ENCODE measurements at regions of chrX and their contacts with region 1.

Region 1: DNA sequence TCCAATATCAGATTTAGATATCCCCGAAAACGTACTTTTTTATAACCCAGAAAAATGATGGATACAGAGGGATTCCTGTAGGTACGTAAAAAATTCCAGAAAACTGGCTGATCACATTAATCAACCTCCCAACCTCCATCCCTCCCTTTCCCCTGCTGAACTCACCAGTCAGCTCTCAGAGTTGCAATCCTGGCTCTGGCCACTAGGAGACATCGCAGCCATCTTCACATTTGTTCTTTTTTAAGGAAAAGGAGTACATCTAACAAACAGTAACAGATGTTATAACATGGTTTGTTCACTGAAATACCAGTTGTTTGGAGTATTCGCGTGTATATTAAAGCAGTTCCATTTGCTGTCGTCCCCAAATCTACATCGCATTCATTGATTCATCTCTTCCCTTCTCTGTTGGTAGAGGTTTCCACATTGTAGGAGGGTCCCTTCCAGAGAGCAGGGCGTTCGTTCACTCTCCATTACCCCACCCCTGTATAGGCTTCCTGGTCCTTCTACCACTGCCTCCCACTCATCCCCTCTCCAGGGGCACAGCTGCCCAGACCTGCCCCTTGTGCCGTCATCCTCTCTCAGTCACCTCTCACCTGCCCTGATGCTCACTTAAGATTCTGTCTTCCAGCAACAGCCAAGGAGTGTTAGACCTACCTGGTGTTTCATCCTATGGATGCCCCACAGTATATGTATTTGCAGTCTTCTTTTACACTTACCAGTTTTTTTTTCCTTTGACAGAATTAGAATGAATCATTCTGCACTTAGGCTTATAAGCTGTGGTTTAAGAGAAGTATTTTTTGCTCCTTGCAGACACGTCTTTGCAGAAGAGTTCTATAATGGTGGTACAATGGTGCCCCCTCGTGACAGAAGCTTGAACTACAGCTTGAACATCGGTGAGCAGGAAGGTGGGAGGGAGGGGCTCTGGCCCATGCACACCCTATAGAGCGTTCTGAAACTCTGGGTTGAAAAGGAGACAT is 36.8 kb upstream of the RAB40AL start:
- DNase-seq: peak; percentile 25 to 75 (median 62)
- ATAC-seq: peak; percentile 90
- H3K4me3 ChIP-seq: no peak overlapping the region
- H3K4me3 Mint-ChIP-seq: peak overlapping the region in 7 of 10 donors; percentile 27 to 64 (median 49)
- H3K27ac ChIP-seq: no peak overlapping the region
- H3K27ac Mint-ChIP-seq: peak overlapping the region in 1 of 9 donors; percentile 22
- H3K4me1 ChIP-seq: no peaks in the 10 kb centered on the region
- H3K4me1 Mint-ChIP-seq: peaks cover 3 to 11% (median 5%) of the 10 kb centered on the region in 7 donors
- H3K27me3 ChIP-seq: no peaks in the 10 kb centered on the region
- H3K27me3 Mint-ChIP-seq: no peaks in the 10 kb centered on the region

Region 2: GRCh38 chrX:102067966-102068708 is 832.1 kb before region 1 on chrX:
- CTCF ChIA-PET with region 1: interaction called, 3 read pairs
- POLR2A ChIA-PET with region 1: no interaction called
- intact Hi-C with region 1: loop called in 1 of 2 experiments (anchors 1 kb)
- DNase-seq: peak in 5 of 9 donors; percentile 4 to 30 (median 17)
- ATAC-seq: no peak
- H3K4me3 ChIP-seq: no peak overlapping the region
- H3K4me3 Mint-ChIP-seq: no peak overlapping the region
- H3K27ac ChIP-seq: no peak overlapping the region
- H3K27ac Mint-ChIP-seq: no peak overlapping the region
- H3K4me1 ChIP-seq: no peaks in the 10 kb centered on the region
- H3K4me1 Mint-ChIP-seq: no peaks in the 10 kb centered on the region
- H3K27me3 ChIP-seq: no peaks in the 10 kb centered on the region
- H3K27me3 Mint-ChIP-seq: peaks cover 0 to 18% (median 9%) of the 10 kb centered on the region in 5 donors

Region 3: DNA sequence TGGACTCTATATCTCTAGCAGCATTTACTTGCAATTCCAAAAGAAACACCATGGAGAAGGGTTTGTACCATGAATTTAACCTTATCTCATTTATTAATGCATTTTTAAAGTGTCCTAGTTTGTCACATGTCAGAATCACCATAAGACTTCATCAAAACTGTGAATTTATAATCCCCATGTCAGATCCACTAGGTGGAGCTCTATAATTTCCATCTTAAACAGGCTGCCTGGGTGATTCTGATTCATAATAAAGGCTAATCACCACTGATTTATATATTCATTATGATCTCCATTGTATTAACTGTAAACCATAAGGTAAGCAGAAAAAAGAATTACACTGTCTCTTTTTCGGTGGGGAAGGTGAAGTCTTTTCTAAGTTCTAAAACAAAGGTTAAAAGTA is 770.8 kb before region 1 on chrX:
- CTCF ChIA-PET with region 1: no interaction called
- POLR2A ChIA-PET with region 1: no interaction called
- intact Hi-C with region 1: loop called in 1 of 2 experiments (anchors 1 kb)
- DNase-seq: no peak
- ATAC-seq: no peak
- H3K4me3 ChIP-seq: no peak overlapping the region
- H3K4me3 Mint-ChIP-seq: no peak overlapping the region
- H3K27ac ChIP-seq: no peak overlapping the region
- H3K27ac Mint-ChIP-seq: no peak overlapping the region
- H3K4me1 ChIP-seq: no peaks in the 10 kb centered on the region
- H3K4me1 Mint-ChIP-seq: peaks cover 0 to 9% (median 5%) of the 10 kb centered on the region in 7 donors
- H3K27me3 ChIP-seq: no peaks in the 10 kb centered on the region
- H3K27me3 Mint-ChIP-seq: peaks cover 18 to 39% (median 31%) of the 10 kb centered on the region in 5 donors

Measured in naive thymus-derived CD4-positive, alpha-beta T cell (primary cell).